Activated T-helper 2 cell treated with anti-CD3 and anti-CD28 coated beads, Interferon-gamma antibody, Interleukin-2, Interleukin-4, amounts not matched to agents 10 μg/mL and 5 μg/mL and 100 μg/mL, durations not matched to agents 14 hours and 24 hours and 36 hours (primary cell): ENCODE measurements at regions of chr2 and their contacts with region 1.

Region 1: DNA sequence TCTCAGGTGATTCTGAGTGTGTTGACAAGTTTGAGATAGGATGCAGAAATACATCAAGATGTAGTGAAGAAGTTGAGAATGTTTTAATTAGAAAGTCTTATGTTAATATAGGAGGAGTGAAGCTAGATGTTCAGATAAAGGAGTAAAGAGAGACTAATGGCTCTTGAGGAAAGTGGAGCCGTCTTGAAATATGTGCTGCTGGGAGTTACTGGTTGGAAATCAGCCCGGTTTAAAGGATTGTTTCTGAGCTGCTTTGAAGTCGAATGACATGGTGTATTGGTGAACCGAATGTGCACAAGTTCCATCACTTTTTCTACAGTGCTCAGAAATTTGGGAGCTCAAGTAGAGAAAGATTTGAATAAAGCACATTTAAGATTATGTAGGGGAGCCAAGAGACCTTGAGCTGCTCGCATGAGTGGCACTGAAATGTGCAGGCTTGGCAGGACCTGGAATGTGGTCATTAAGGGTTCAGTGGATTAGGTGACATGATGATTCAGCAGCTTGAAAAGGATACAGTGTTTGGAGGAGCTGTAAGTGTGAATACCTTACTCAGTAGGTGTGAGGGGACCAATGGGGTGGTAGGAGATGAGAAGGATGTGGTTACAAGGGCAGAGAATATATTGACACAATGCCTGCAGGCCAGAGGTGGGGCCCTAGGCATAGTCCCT is 68.6 kb downstream of the CAB39 start:
- DNase-seq: peak; percentile 26
- H3K4me3 Mint-ChIP-seq: peak overlapping the region; percentile 3
- H3K27ac Mint-ChIP-seq: peak overlapping the region; percentile 77
- H3K4me1 Mint-ChIP-seq: peaks cover 61% of the 10 kb centered on the region
- H3K27me3 Mint-ChIP-seq: no peaks in the 10 kb centered on the region

Region 2: GRCh38 chr2:230721712-230722111 is 59.6 kb before region 1 on chr2:
- intact Hi-C with region 1: loop called (anchors 5 kb)
- DNase-seq: no peak
- H3K4me3 Mint-ChIP-seq: peak overlapping the region; percentile 34
- H3K27ac Mint-ChIP-seq: peak overlapping the region; percentile 82
- H3K4me1 Mint-ChIP-seq: peaks cover 72% of the 10 kb centered on the region
- H3K27me3 Mint-ChIP-seq: no peaks in the 10 kb centered on the region

Region 3: DNA sequence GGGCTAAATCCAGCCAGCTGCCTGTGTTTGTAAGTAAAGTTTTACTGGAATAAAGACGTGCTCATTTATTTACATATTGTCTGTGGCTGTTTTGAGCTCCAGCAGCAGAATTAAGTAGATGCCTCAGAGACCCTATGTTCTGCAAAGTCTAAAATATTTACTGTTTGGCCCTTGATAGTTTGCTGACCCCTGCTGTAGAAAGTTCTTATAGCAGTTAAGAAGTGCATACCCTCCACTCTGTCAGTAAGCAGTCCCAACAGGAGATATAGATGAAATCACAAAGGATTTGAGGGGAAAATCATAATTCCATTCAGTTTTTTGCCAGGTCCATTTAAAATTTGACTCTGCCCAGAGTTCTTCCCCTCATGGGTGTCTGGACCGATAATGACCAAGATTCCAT is 33.4 kb after region 1 on chr2:
- intact Hi-C with region 1: no loop called
- DNase-seq: no peak
- H3K4me3 Mint-ChIP-seq: no peak overlapping the region
- H3K27ac Mint-ChIP-seq: no peak overlapping the region
- H3K4me1 Mint-ChIP-seq: peaks cover 15% of the 10 kb centered on the region
- H3K27me3 Mint-ChIP-seq: no peaks in the 10 kb centered on the region